ENCODE measurements at regions of chr7 and their contacts with region 1.

Region 1: GRCh38 chr7:140134039-140134438 is 42.7 kb downstream of the KDM7A start:
- DNase-seq: no peak
- ATAC-seq: no peak
- H3K4me3 ChIP-seq: no peak overlapping the region
- H3K4me3 Mint-ChIP-seq: no peak overlapping the region
- H3K27ac ChIP-seq: no peak overlapping the region
- H3K27ac Mint-ChIP-seq: peak overlapping the region in 1 of 9 donors; percentile 22
- H3K4me1 ChIP-seq: no peaks in the 10 kb centered on the region
- H3K4me1 Mint-ChIP-seq: peaks cover 3 to 32% (median 17%) of the 10 kb centered on the region in 7 donors
- H3K27me3 ChIP-seq: no peaks in the 10 kb centered on the region
- H3K27me3 Mint-ChIP-seq: no peaks in the 10 kb centered on the region

Region 2: DNA sequence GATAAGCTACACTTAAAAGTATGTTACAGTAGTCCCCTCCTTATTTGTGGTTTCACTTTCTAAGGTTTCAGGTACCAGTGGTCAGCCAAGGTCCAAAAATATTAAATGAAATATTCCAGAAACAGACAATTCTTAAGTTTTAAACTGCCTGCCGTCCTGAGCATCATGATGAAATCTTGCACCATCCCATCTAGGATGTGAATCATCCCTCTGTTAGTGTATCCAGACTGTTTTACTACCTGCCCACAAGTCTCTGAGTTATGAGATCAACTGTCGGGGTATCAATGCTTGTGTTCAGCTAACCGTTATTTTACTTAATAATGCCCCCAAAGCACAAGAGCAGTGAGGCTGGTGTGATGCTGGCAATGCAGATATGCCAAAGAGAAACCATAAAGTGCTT is 31.4 kb after region 1 on chr7:
- CTCF ChIA-PET with region 1: no interaction called
- POLR2A ChIA-PET with region 1: no interaction called
- intact Hi-C with region 1: loop called in 1 of 2 experiments (anchors 5 kb)
- DNase-seq: no peak
- ATAC-seq: no peak
- H3K4me3 ChIP-seq: no peak overlapping the region
- H3K4me3 Mint-ChIP-seq: peak overlapping the region in 8 of 10 donors; percentile 12 to 76 (median 40)
- H3K27ac ChIP-seq: no peak overlapping the region
- H3K27ac Mint-ChIP-seq: peak overlapping the region in 2 of 9 donors; percentile 21 to 46
- H3K4me1 ChIP-seq: peaks cover 13 to 44% of the 10 kb centered on the region in 2 donors
- H3K4me1 Mint-ChIP-seq: peaks cover 34 to 97% (median 84%) of the 10 kb centered on the region in 7 donors
- H3K27me3 ChIP-seq: no peaks in the 10 kb centered on the region
- H3K27me3 Mint-ChIP-seq: no peaks in the 10 kb centered on the region

Measured in naive thymus-derived CD4-positive, alpha-beta T cell (primary cell).